Body of pancreas (tissue), 4 donors: ENCODE measurements at regions of chr9 and their contacts with region 1.

Region 1: DNA sequence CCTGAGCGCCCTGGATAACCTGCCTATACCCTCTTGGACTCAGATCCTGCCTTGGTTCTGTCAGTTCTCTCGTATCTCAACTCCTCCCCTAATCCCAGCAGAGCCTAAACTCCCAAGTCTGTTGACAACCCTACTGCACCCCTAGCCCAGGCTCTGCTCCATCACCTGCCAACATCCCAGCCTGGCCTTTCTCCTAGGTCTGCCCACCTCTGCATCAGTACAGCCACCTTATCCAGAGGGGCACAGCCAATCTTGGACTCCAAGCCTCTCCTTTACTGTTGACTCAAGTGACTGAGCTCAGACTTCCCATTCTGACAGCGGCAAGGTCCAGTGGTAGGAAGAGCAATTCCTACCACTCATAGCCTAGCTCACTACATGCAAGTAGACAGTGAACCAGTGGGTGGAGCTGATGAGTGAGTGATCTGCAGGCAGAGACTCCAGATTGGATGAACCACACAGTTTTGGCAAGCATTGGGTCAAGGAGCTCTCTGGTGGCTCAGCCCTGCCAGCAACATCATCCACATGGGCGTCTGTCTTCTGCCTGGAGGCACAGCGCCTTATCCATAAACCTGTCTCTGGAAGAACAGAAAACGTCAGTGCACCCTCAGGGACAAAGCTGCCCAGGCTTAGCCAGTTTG is 26.5 kb downstream of the TRMO start:
- DNase-seq: no peak
- ATAC-seq: no peak
- H3K4me3 ChIP-seq: no peak overlapping the region
- H3K27ac ChIP-seq: no peak overlapping the region
- H3K4me1 ChIP-seq: peaks cover 2% of the 10 kb centered on the region
- H3K27me3 ChIP-seq: no peaks in the 10 kb centered on the region
- CTCF ChIP-seq: no peak
- POLR2A ChIP-seq: no peak

Region 2: GRCh38 chr9:97710356-97711222 is 185.2 kb before region 1 on chr9:
- intact Hi-C with region 1: loop called (anchors 5 kb)
- DNase-seq: peak; percentile 48 to 63 (median 58)
- ATAC-seq: peak; percentile 85
- H3K4me3 ChIP-seq: no peak overlapping the region
- H3K27ac ChIP-seq: no peak overlapping the region
- H3K4me1 ChIP-seq: no peaks in the 10 kb centered on the region
- H3K27me3 ChIP-seq: no peaks in the 10 kb centered on the region
- CTCF ChIP-seq: peak; percentile 61 to 90 (median 78)
- POLR2A ChIP-seq: no peak

Region 3: GRCh38 chr9:97866848-97867247 is 29.0 kb before region 1 on chr9:
- intact Hi-C with region 1: no loop called
- DNase-seq: no peak
- ATAC-seq: no peak
- H3K4me3 ChIP-seq: no peak overlapping the region
- H3K27ac ChIP-seq: no peak overlapping the region
- H3K4me1 ChIP-seq: no peaks in the 10 kb centered on the region
- H3K27me3 ChIP-seq: no peaks in the 10 kb centered on the region
- CTCF ChIP-seq: no peak
- POLR2A ChIP-seq: no peak

Region 4: DNA sequence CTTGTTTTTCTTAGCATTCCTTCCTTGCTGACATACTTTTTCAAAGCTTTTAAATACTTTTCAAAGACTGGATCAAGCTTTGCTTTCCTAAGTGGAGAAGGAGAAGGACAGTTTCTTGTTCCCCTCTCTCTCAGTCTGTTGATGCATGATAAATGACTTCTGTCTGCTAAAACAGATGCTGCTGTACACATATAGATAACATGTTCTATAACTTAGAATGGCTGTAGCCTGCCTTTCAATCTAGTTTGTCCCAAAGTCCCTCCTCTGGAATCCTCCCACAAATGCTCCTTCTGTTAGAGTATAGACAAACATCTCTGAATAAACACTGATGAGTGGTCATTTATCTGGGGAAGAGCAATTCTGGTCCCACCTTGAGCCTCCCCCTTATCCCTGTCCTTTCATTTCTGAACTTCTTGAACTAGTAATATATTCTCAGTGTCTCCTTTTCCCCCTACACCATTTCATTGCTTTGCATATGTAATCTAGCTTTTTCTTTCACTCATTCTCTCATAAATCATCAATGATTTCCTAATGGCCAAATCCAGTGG is 47.6 kb after region 1 on chr9:
- intact Hi-C with region 1: no loop called
- DNase-seq: no peak
- ATAC-seq: no peak
- H3K4me3 ChIP-seq: no peak overlapping the region
- H3K27ac ChIP-seq: no peak overlapping the region
- H3K4me1 ChIP-seq: no peaks in the 10 kb centered on the region
- H3K27me3 ChIP-seq: no peaks in the 10 kb centered on the region
- CTCF ChIP-seq: no peak
- POLR2A ChIP-seq: no peak

Region 5: DNA sequence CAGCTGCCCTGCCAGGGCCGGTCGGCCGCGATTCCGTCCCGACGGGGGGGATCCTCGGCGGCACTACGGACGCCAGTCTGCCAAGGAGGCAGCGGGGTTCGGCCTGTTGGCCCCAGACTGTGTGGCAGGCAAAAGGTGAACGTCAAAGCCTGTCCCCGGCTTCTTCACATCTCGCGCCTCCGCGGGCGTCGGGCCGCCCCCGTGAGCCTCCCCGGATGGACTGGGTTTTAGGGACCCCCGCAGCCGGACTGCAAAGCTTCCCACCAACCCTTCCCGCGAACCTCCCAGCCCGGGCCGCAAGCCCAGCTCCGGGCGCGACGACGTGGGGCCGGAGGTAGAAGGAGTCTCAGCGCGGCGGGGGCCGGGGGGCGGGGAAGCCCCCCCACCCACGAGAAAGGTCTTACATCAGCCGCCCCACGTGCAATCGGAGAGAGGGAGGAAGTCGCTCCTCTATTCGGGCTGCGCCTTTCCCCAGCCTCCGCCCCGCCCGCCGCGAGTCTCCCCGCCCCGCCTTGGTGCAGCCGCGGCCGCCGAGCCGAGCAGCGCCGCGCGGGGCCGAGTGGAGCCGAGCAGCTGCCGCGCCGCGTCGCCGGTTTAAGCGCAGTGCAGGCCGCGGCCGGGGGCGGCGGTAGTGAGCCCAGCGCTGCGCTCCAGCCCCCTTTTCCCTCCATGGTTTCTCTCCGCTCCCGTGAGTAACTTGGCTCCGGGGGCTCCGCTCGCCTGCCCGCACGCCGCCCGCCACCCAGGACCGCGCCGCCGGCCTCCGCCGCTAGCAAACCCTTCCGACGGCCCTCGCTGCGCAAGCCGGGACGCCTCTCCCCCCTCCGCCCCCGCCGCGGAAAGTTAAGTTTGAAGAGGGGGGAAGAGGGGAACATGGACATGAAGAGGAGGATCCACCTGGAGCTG is 87.1 kb after region 1 on chr9 and contains the start of gene ANP32B:
- intact Hi-C with region 1: no loop called
- DNase-seq: peak; percentile 89 to 91 (median 90)
- ATAC-seq: peak; percentile 87
- H3K4me3 ChIP-seq: peak within 1 kb of the TSS; percentile 75 to 99
- H3K27ac ChIP-seq: peak within 1 kb of the TSS; percentile 88 to 97 (median 96)
- H3K4me1 ChIP-seq: peaks cover 37% of the 10 kb centered on the region
- H3K27me3 ChIP-seq: no peaks in the 10 kb centered on the region
- CTCF ChIP-seq: peak; percentile 60 to 98 (median 91)
- POLR2A ChIP-seq: peak; percentile 30 to 53 (median 45)
- total RNA-seq, gene ANP32B: 38.4 to 65.9 TPM